WTC11 (cell line): ENCODE measurements at regions of chr14 and their contacts with region 1.

Region 1: GRCh38 chr14:68911594-68912227 is 67.4 kb downstream of the ACTN1 start:
- DNase-seq: peak; percentile 89
- ATAC-seq: peak; percentile 94
- H3K4me3 Mint-ChIP-seq: no peak overlapping the region
- H3K27ac Mint-ChIP-seq: peak overlapping the region; percentile 60; the same call in 1 of the 2 replicates
- H3K4me1 Mint-ChIP-seq: no peaks in the 10 kb centered on the region; the same call in 1 of the 2 replicates
- H3K27me3 Mint-ChIP-seq: no peaks in the 10 kb centered on the region
- CTCF ChIP-seq: peak; percentile 99

Region 2: DNA sequence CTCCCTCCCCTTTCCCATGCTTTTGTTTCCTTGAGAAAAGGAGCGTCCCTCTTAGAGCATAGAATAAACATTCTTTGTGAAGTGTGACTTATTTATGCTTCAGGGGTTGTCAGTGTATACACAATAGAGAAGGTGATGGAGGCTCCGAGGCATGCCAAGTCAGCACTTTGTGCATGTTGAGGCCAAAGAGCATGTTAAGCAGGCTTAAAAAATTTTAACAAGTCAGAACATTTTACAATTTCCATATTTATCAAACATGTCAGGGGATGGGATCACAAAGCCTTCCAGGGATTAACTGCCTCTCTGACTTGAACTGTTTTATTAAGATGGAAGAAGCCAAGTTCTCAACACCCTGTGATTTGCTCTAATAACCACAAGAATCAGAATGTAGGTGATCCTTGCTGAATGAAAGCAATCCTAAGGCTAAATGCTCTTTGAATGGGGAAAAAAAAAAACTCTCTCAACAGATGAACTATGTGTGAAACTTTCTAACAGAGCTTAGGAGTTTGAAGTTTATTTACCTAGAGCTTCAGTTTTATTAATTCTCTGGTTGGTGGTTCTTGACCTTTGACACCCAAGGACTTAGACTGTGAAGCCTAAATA is 869.0 kb before region 1 on chr14:
- CTCF ChIA-PET with region 1: no interaction called
- POLR2A ChIA-PET with region 1: no interaction called
- DNase-seq: no peak
- ATAC-seq: no peak
- H3K4me3 Mint-ChIP-seq: no peak overlapping the region
- H3K27ac Mint-ChIP-seq: peak overlapping the region; percentile 97
- H3K4me1 Mint-ChIP-seq: peaks cover 62% of the 10 kb centered on the region
- H3K27me3 Mint-ChIP-seq: no peaks in the 10 kb centered on the region
- CTCF ChIP-seq: no peak

Region 3: DNA sequence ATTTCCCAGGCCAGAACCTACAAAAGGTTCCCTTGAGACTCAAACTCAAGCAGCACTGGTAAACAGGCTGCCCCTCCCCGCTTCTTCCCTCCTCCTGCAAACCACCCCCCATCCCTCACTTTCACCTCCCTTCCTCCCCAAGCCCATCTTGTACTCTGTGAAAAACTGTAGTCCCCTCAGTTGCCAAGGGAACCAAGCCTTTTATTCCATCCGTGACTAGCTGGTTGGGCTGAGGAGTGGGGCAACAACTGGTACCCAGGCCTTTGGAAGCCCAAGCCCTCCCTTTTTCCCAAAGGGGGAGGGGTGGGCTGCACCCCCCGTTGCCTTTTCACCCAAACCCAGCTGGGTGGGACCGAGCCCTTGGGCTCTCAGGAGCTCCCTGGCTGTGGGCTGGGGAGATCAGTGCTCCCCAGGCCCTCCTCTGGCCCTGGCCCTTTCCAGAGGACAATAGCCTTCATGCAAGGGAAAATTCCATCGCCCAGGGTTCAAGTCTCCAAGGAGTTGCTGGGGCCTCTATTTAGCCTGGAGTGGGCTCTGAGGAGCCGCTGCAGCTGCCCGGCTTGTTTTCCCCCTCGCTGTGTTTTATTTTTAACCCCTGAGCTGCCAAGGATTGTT is 180.8 kb before region 1 on chr14:
- CTCF ChIA-PET with region 1: no interaction called
- POLR2A ChIA-PET with region 1: no interaction called
- DNase-seq: peak; percentile 27
- ATAC-seq: peak; percentile 83
- H3K4me3 Mint-ChIP-seq: no peak overlapping the region
- H3K27ac Mint-ChIP-seq: no peak overlapping the region
- H3K4me1 Mint-ChIP-seq: peaks cover 29% of the 10 kb centered on the region
- H3K27me3 Mint-ChIP-seq: no peaks in the 10 kb centered on the region
- CTCF ChIP-seq: no peak

Region 4: GRCh38 chr14:68881396-68881795 is 30.3 kb before region 1 on chr14:
- CTCF ChIA-PET with region 1: no interaction called
- POLR2A ChIA-PET with region 1: no interaction called
- DNase-seq: no peak
- ATAC-seq: no peak
- H3K4me3 Mint-ChIP-seq: no peak overlapping the region
- H3K27ac Mint-ChIP-seq: no peak overlapping the region
- H3K4me1 Mint-ChIP-seq: no peaks in the 10 kb centered on the region
- H3K27me3 Mint-ChIP-seq: no peaks in the 10 kb centered on the region
- CTCF ChIP-seq: no peak

Region 5: DNA sequence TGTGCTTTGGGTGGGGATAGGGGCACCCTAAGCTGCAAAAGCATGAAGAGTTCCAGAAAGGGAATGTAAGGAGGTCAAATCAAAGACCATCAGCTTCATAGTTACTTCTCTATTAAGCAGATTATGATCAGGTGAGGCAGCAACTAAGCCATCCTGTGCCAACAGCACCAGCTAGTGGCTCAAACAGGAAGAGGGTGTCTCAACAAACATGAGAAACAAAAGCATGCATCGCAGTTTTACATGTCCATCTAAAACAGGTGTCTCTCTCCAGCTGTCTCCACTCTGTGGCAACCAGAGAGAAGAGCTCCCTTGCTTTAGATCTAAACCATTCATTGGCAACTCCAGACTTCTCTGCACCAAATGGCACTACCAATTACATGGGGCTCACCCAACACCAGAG is 14.5 kb after region 1 on chr14:
- CTCF ChIA-PET with region 1: interaction called, 24 read pairs
- POLR2A ChIA-PET with region 1: no interaction called
- DNase-seq: no peak
- ATAC-seq: peak; percentile 13; the same call in 1 of the 2 replicates
- H3K4me3 Mint-ChIP-seq: no peak overlapping the region
- H3K27ac Mint-ChIP-seq: no peak overlapping the region
- H3K4me1 Mint-ChIP-seq: peaks cover 34% of the 10 kb centered on the region
- H3K27me3 Mint-ChIP-seq: no peaks in the 10 kb centered on the region
- CTCF ChIP-seq: no peak

Region 6: DNA sequence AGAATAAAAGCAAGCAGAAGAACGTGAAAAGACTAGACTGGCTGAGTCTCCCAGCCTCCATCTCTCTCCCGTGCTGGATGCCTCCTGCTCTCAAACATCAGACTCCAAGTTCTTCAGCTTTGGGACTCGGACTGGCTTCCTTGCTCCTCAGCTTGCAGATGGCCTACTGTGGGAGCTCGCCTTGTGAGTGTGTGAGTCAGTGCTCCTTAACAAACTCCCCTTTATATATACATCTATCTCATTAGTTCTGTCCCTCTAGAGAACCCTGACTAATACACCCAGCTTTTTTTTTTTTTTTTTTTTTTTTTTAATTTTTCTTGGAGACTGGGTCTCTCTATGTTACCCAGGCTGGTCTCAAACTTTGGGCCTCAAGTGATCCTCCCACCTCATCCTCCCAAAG is 20.5 kb after region 1 on chr14:
- CTCF ChIA-PET with region 1: interaction called, 11 read pairs
- POLR2A ChIA-PET with region 1: no interaction called
- DNase-seq: no peak
- ATAC-seq: no peak
- H3K4me3 Mint-ChIP-seq: no peak overlapping the region
- H3K27ac Mint-ChIP-seq: no peak overlapping the region
- H3K4me1 Mint-ChIP-seq: peaks cover 46% of the 10 kb centered on the region
- H3K27me3 Mint-ChIP-seq: no peaks in the 10 kb centered on the region
- CTCF ChIP-seq: no peak

Region 7: DNA sequence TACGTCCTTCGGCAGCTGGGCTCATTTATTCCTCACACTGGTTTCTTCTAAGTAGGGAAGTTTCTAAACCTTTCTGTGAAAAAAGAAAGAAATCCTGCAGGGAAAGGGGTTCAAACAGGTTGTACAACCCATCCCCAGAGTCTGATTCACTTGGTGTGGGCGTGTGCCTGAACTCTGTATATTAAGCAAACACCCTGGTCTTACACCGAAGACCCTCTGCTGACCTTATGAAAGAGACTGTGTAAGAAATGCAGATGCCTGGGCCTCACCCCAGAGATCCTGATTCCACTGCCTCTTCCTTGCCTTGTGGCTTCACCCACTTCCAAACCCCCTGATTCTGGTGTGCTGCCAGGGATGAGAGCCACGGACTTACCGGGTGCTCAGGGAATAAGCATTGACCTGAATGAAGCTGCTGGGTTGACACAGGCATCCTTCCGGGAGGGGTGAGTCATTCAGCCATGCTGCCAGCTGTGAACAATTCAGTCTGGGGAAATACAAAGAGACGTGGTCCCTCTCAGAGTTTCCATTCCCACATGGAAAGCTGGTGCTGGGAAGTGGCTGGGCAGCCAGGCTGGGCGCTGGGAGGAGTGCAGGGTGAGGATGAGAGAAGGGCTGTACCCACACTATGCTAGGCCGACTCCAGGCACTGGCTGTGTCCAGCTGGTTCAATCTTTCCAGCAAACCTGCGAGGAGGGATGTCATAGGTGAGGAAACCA is 93.9 kb after region 1 on chr14:
- CTCF ChIA-PET with region 1: interaction called, 19 read pairs
- POLR2A ChIA-PET with region 1: no interaction called
- DNase-seq: no peak
- ATAC-seq: peak; percentile 34
- H3K4me3 Mint-ChIP-seq: no peak overlapping the region
- H3K27ac Mint-ChIP-seq: no peak overlapping the region
- H3K4me1 Mint-ChIP-seq: peaks cover 26% of the 10 kb centered on the region
- H3K27me3 Mint-ChIP-seq: peaks cover 3% of the 10 kb centered on the region
- CTCF ChIP-seq: no peak